ENCODE measurements at regions of chr13 and their contacts with region 1.

Region 1: DNA sequence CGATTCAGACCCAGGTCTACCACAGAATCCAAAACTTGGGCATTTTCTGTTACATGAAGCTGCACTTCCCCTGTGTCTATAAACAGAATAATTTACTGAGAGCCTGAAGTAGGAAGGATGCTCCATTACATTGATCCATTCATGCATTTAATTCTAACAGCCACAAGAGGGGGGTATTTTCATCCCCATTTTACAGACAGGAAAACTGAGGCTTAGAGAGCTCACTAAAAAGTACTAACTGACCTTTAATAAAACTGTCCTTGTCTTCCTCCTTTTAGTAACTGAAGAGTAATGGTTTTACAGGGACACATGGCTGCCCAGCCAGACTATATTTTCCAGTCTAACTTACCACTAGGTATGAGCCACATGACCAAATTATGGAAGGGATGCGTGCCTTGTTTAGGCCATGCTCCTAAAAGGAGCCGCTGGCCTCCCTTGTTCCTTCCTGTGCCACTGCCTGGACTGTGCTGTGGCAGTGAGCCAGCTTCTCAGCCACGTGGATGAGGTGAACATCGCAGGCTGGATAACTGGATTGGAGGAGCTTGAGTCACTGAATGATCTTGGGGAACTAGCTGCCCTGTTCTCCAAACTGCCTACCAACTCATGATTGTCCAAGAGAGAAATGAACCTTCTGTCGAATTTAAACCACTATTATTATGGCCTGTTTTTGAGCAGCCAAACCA is 108.3 kb downstream of the DOCK9 start:
- DNase-seq: no peak
- H3K4me3 ChIP-seq: no peak overlapping the region
- H3K27ac ChIP-seq: no peak overlapping the region
- H3K4me1 ChIP-seq: no peaks in the 10 kb centered on the region
- H3K27me3 ChIP-seq: no peaks in the 10 kb centered on the region
- CTCF ChIP-seq: peak; percentile 61

Region 2: DNA sequence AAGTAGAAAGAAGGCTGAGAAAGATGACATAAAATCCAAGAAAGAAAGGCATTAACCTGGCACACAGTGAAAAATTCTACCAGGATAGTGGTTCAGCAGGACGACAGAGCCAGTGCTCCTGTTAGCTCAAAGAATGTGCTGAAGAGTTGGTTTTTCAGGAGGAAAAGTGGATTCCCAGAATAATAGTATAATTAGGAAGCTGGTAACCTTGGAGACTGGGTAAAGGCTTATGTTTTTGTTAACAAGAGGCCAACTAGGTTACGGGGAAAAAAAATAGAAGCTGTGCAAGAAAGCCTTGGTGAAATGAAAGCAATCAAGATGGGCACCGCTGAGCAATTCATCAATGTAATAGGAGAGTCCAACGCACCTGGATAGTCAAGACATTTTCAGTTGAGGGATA is 171.8 kb before region 1 on chr13:
- CTCF ChIA-PET with region 1: no interaction called
- POLR2A ChIA-PET with region 1: interaction called, 10 read pairs
- intact Hi-C with region 1: no loop called
- DNase-seq: no peak
- H3K4me3 ChIP-seq: no peak overlapping the region
- H3K27ac ChIP-seq: no peak overlapping the region
- H3K4me1 ChIP-seq: no peaks in the 10 kb centered on the region
- H3K27me3 ChIP-seq: no peaks in the 10 kb centered on the region
- CTCF ChIP-seq: no peak